MCF 10A (cell line): ENCODE measurements at regions of chr6 and their contacts with region 1.

Region 1: DNA sequence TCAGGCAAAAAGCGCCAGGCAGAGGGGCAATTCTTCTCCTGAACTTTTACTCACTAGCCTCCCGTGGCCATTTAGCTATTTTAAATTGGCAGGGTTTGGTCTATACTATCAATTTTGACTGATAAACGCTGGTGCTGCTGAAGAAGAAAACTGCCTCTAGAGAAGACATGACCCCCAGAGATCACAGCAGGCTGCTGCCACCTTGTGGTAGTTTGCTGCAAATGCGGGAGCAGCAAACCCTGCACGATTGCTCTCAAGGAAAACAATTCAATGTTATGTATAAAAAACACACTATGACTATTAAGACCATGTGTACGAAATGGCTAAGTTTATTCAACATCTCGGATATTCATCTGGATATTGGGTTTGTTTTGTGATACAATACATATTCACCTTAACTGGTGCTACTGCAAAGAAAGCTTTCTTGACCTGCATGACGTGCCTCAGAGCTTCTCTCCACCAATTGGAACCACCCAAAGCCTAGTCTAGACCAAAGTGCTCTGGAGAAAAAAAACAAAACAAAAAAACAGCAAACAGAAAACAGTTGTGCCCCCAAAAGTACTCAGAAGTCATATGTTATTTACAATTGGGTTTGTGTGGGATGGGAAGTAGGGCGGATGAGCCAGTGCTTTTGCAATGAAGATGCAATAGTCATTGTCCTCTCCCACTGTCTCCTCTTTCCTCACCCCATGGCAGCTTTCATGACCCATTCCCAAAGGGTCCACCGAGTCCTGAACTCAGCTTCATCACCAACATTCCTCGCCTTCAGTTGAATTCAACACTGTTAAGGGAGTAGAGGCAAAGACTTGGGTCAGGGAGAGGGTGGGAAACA is 19.6 kb upstream of the IL17F start:
- DNase-seq: peak; percentile 65
- H3K4me3 Mint-ChIP-seq: no peak overlapping the region
- H3K27ac Mint-ChIP-seq: peak overlapping the region; percentile 16
- H3K4me1 Mint-ChIP-seq: no peaks in the 10 kb centered on the region
- H3K27me3 Mint-ChIP-seq: no peaks in the 10 kb centered on the region
- CTCF ChIP-seq: peak; percentile 90

Region 2: GRCh38 chr6:51322505-51322904 is 941.4 kb before region 1 on chr6:
- CTCF ChIA-PET with region 1: no interaction called
- POLR2A ChIA-PET with region 1: no interaction called
- intact Hi-C with region 1: no loop called
- DNase-seq: no peak
- H3K4me3 Mint-ChIP-seq: no peak overlapping the region
- H3K27ac Mint-ChIP-seq: no peak overlapping the region
- H3K4me1 Mint-ChIP-seq: no peaks in the 10 kb centered on the region
- H3K27me3 Mint-ChIP-seq: no peaks in the 10 kb centered on the region
- CTCF ChIP-seq: no peak

Region 3: DNA sequence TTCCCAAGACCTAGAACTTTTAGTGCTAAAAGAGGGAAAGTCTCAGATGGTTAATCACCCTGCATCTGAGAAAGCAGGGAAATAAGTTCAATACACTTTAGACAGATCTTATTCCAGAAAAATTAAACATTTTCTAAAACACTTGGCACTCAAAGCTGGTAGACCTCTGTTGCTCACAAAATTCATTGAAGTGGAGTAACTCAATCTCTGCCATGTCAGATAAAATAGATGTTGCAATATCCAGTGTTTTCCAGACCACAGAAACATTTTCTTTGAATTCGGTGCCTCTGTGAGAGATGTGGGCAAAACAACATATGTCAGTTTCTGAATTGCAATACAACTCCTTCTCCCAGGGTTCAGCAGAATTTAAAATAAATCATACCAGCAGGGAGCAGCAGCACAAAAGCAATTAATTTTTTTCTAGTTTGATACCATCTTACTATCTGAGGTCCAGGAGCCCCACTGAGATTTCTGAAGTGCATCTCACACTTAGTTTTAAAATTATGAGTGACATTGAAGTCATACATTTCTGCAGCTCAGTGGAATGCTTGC is 165.2 kb before region 1 on chr6:
- CTCF ChIA-PET with region 1: interaction called, 44 read pairs
- POLR2A ChIA-PET with region 1: no interaction called
- intact Hi-C with region 1: loop called (anchors 1 kb)
- DNase-seq: peak; percentile 9
- H3K4me3 Mint-ChIP-seq: no peak overlapping the region
- H3K27ac Mint-ChIP-seq: no peak overlapping the region
- H3K4me1 Mint-ChIP-seq: no peaks in the 10 kb centered on the region
- H3K27me3 Mint-ChIP-seq: peaks cover 25% of the 10 kb centered on the region
- CTCF ChIP-seq: peak; percentile 26

Region 4: DNA sequence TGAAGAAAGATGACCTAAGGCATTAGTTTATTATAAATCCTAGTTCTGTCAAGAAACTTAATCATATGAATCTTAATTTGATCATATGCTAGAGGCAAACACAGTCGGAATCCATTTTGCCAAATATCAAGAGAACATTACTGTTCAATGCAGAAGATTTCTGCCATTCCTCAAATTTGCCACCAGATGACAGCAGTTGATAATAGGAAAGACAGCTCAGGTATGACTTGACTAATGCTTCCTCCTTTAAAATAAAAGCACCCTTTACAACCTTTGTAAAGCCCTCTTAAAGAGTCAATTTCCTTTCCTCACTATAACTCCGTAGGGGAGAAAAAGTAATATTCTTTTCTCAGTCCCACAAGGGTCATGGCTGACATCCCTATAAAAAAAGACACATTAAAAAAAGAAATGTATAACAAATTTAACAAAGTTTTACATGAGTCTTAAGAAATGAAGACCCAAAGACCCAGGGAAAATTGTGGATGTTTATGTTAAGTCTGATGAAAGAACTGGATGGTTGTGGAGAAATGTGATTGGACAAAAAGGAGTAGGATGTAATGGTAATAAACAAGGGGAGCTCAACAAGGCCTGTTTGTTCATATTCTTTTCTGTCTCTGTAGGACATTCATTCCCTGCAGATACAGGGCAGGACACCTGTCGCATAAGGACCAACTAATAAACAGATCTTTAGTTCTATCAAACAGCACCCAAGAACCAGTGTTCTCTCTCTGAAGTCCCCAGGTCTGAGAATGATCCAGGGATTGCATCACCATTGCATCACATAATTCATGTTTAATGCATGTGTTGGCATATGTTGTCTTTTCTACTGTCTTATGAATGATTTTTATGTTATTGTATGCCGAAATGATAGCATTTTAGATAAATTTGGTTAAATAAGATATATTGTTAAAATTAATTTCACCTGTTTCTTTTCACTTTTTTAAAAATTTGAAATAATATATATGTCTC is 100.7 kb before region 1 on chr6:
- CTCF ChIA-PET with region 1: interaction called, 178 read pairs
- POLR2A ChIA-PET with region 1: interaction called, 7 read pairs
- intact Hi-C with region 1: loop called (anchors 1 kb)
- DNase-seq: peak; percentile 59
- H3K4me3 Mint-ChIP-seq: no peak overlapping the region
- H3K27ac Mint-ChIP-seq: peak overlapping the region; percentile 86
- H3K4me1 Mint-ChIP-seq: peaks cover 11% of the 10 kb centered on the region
- H3K27me3 Mint-ChIP-seq: no peaks in the 10 kb centered on the region
- CTCF ChIP-seq: peak; percentile 86

Region 5: DNA sequence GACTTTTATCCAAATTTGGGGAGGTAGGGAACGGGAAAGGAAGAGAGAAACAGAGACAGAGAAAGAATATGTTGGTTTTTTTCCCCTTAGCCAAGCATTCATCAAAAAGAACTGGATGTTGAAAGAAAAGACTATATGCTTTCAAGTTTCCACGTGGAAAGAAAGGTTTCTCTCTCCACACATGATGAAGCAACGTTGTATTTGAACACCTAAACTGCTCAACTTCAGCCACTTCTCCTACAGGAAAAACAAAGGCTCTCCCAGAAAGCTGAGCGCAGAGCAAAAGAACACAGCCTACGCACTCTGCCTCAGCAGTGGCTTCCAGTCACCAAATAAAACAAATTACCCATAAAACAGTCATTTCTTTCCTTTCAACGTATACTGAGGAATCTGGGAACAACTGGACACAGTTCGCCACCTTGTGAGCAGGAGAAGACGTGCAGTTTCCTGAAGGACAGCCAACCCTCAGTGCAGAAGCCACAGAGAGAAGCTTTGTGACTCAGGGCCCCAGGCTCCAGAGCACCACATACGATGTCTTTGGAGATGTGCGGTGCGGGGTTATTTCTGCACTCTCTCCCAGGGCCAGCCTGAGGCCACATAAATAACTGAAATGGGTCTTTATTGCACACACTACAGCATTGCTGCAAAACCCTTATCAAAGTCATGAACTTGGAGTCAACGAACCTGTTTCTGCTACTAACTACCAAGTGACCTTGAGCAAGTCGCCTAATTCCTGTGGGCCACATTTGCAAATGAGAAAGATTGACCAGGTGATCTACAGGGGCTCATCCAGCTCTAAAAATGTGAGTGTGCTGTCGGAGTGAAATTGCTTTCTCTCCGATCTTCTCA is 29.7 kb before region 1 on chr6:
- CTCF ChIA-PET with region 1: interaction called, 30 read pairs
- POLR2A ChIA-PET with region 1: no interaction called
- intact Hi-C with region 1: no loop called
- DNase-seq: peak; percentile 83
- H3K4me3 Mint-ChIP-seq: no peak overlapping the region
- H3K27ac Mint-ChIP-seq: no peak overlapping the region
- H3K4me1 Mint-ChIP-seq: no peaks in the 10 kb centered on the region
- H3K27me3 Mint-ChIP-seq: peaks cover 38% of the 10 kb centered on the region
- CTCF ChIP-seq: peak; percentile 67

Region 6: DNA sequence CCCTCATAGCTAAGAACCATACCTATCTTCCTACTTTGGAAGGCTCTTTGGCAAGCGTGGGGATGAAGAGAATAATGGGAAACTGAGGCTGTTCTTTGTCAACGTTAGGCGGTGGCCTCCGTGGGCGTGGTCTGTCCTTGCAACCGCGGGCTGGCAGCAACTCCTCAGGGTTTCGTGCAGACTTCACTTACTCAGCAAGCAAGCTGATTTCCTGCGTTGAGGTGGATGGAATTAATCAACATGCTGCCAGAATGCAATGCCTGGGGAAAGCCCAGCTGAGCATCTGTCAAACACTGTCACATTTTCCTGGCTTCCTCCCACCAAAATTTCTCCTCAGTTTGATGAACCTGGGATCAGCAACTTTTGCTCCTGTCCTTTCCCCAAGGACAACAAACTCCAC is 10.4 kb before region 1 on chr6:
- CTCF ChIA-PET with region 1: interaction called, 48 read pairs
- POLR2A ChIA-PET with region 1: interaction called, 4 read pairs
- intact Hi-C with region 1: no loop called
- DNase-seq: peak; percentile 8
- H3K4me3 Mint-ChIP-seq: no peak overlapping the region
- H3K27ac Mint-ChIP-seq: no peak overlapping the region
- H3K4me1 Mint-ChIP-seq: peaks cover 7% of the 10 kb centered on the region
- H3K27me3 Mint-ChIP-seq: peaks cover 55% of the 10 kb centered on the region
- CTCF ChIP-seq: no peak

Region 7: DNA sequence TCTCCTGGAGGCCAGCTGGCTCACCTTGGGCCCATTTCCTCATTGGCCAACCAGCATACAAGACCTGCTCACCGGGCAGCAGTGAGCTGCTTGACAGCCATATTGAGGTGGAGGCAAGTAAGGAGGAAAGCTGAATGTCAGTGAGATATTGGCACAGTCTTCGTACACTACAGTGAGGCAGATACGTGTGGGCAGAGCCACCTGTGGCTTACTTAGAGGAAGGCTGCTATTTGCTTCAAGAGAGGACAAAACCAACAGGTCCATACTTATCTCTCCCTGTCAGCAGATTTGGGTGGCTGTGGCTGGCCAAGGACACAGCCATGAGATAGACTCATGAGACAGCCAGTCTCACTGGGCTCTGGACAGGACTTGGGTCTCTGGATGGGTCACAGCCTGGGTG is 35.7 kb after region 1 on chr6:
- CTCF ChIA-PET with region 1: no interaction called
- POLR2A ChIA-PET with region 1: no interaction called
- intact Hi-C with region 1: no loop called
- DNase-seq: no peak
- H3K4me3 Mint-ChIP-seq: no peak overlapping the region
- H3K27ac Mint-ChIP-seq: no peak overlapping the region
- H3K4me1 Mint-ChIP-seq: no peaks in the 10 kb centered on the region
- H3K27me3 Mint-ChIP-seq: no peaks in the 10 kb centered on the region
- CTCF ChIP-seq: no peak

Region 8: GRCh38 chr6:52399511-52400312 is 135.8 kb after region 1 on chr6:
- CTCF ChIA-PET with region 1: interaction called, 15 read pairs
- POLR2A ChIA-PET with region 1: no interaction called
- intact Hi-C with region 1: loop called (anchors 1 kb)
- DNase-seq: peak; percentile 70
- H3K4me3 Mint-ChIP-seq: no peak overlapping the region
- H3K27ac Mint-ChIP-seq: no peak overlapping the region
- H3K4me1 Mint-ChIP-seq: peaks cover 10% of the 10 kb centered on the region
- H3K27me3 Mint-ChIP-seq: no peaks in the 10 kb centered on the region
- CTCF ChIP-seq: peak; percentile 73